ENCODE measurements at regions of chr2 and their contacts with region 1.

Region 1: DNA sequence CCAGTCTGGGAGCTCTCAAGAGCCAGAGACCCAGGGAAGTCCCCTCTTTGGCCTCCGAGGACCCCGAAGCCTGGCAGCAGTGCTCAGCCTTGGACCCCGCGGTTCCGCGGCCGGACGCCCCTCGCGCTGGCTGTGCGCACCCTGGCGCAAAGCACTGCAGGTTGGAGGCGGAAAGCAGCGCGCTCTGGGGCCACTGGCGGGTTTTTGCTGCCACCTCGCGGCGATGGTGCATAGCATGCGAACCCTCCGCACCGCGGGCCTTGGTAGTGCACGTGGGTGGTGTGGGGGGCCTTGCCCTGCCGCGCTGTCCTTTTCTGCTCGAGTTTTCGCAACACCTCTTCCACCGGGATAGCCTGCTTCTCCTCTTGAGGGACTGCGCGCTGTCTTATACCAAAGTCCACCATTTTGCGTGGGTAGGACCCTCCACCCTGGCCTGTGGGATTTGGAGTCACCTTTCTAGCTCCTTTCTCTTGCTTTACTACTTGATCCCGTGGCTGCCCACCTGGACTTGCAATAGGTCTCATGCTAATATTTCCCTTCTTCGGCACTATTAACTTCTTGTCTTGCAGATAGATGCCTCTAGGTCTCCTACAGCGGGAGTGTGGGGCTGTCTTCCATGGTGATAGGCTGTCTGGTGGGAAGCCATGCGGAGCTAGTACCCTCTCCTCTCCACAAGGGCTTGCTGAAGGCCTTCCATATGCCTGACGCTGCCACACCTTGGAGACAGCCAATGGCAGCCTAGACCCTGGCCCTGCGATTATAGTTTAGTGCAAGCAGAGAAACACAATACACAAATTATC is 14.3 kb downstream of the SIX3 start:
- DNase-seq: peak; percentile 85
- CTCF ChIP-seq: peak; percentile 97

Region 2: DNA sequence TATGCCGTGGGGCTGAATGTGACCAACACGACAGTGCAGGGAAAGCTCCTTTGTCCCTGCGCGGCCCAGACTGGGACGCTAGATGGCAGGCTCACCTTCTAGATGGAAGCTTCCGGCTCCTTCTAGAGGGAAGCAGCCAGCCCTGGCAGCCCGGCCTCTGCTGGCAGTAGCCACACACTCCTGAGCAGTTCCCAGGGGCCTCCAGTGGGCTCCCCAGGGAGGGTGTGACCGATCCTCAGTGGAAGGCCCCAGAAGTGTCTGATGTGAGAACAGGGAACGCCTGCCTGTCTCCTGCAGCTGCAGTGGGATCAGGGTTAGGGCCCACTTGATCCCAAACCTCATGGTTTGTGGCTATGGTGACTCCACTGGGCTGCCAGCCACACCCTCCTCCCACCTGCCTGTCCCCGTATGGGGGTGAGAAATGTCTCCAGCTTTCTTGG is 911.5 kb before region 1 on chr2:
- CTCF ChIA-PET with region 1: interaction called, 24 read pairs
- POLR2A ChIA-PET with region 1: no interaction called
- DNase-seq: peak; percentile 87
- CTCF ChIP-seq: peak; percentile 97

Region 3: GRCh38 chr2:44361330-44362206 is 594.2 kb before region 1 on chr2 and contains the starts of genes CAMKMT and PREPL:
- CTCF ChIA-PET with region 1: interaction called, 11 read pairs
- POLR2A ChIA-PET with region 1: no interaction called
- DNase-seq: peak; percentile 97
- CTCF ChIP-seq: no peak

Region 4: GRCh38 chr2:44479122-44479887 is 476.5 kb before region 1 on chr2:
- CTCF ChIA-PET with region 1: interaction called, 133 read pairs
- POLR2A ChIA-PET with region 1: no interaction called
- DNase-seq: peak; percentile 79
- CTCF ChIP-seq: peak; percentile 99

Region 5: DNA sequence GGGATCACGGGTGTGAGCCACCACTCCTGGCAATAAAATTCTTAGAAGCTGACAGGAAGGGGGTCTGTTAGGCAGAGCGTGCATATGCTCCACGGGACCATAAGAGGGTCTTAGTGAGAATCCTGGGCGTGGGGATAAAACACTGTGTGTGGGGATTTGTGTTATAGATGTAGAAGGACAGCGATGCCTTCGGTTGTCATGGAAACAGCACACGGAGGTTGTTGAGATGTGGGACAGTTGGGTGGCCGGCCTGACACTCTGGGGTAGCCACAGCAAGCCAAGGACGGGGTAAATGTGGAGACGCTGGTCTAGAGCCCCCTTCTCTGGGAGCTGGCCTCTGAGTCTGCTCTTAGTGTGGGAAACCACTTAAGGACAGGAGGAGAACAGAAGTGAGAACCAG is 139.5 kb before region 1 on chr2:
- CTCF ChIA-PET with region 1: no interaction called
- POLR2A ChIA-PET with region 1: no interaction called
- DNase-seq: no peak
- CTCF ChIP-seq: no peak

Region 6: GRCh38 chr2:44928483-44929158 is 27.2 kb before region 1 on chr2:
- CTCF ChIA-PET with region 1: interaction called, 28 read pairs
- POLR2A ChIA-PET with region 1: no interaction called
- DNase-seq: no peak
- CTCF ChIP-seq: no peak

Region 7: GRCh38 chr2:44981136-44982108 is 25.6 kb after region 1 on chr2:
- CTCF ChIA-PET with region 1: interaction called, 28 read pairs
- POLR2A ChIA-PET with region 1: no interaction called
- DNase-seq: peak; percentile 75
- CTCF ChIP-seq: peak; percentile 81

Region 8: DNA sequence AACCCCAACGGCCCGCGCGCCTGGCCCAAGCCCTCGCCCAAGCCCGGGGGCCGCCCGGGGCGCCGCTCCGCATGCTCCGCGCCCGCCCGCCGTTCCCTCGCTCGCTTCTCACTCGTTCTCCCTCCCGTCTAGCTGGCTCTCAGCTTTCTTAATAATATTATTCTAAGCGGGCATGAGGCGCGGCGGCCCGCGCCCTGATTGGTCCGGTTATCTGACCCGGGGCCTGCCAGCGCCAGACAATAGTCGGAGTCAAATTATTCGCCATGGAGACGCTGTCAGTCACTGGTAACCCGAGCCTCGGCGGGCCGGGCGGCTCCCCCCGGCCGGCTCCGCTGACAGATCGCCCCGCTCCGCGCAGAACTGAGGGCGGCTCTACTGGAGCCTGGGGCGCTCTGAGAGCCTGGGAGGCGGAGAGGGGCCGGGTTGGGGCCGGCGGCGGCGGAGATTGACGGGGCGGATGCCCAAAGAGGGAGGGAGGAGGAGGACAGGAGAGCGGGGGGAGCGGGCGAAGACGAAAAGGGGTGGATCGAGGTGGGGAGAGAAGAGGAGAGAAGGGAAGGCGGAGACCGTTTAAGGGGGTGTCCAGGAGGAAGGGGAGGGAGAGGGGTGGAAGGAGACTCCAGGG is 53.6 kb after region 1 on chr2 and contains the start of gene SIX2:
- CTCF ChIA-PET with region 1: no interaction called
- POLR2A ChIA-PET with region 1: no interaction called
- DNase-seq: peak; percentile 38
- CTCF ChIP-seq: no peak